T-cell (primary cell): ENCODE measurements at regions of chr5 and their contacts with region 1.

Region 1: DNA sequence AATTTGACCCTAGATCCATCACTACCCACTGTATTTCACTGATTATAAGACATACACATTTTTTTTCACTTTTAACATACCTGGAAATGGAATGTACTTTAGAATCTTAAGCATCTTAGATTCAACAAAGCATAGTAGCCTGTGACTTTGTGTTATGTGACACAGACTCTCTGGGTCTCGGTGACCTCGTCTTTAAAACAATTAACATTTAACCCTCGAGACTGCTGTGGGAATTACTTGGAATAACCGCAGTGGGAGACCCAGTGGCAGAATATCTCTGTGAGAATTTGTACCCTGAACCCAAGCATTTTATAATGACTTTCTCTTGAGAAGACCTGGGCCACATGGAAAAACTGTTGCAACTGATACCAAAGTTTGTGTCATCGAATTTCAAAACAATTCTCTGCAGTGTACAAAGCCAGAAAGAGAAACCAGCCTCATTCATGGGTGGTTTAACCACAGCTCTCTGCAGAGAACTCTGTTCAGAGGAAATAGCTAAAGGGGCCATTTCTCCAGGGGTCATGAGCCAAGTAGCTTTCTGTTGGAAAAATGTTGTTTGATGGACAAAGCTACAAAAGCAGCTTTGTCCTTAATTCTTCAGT is 10.0 kb upstream of the RETREG1 start:
- DNase-seq: peak in 7 of 35 experiments; percentile 7 to 48 (median 13)
- ATAC-seq: peak; percentile 60 to 71 (median 61)
- H3K4me3 ChIP-seq: no peak overlapping the region
- H3K4me3 Mint-ChIP-seq: peak overlapping the region in 2 of 3 donors; percentile 21 to 25
- H3K27ac ChIP-seq: peak overlapping the region; percentile 39
- H3K27ac Mint-ChIP-seq: peak overlapping the region; percentile 79 to 96
- H3K4me1 ChIP-seq: peaks cover 48 to 50% of the 10 kb centered on the region in 2 experiments
- H3K4me1 Mint-ChIP-seq: peaks cover 52 to 66% (median 55%) of the 10 kb centered on the region in 3 donors
- H3K27me3 ChIP-seq: no peaks in the 10 kb centered on the region
- H3K27me3 Mint-ChIP-seq: no peaks in the 10 kb centered on the region

Region 2: DNA sequence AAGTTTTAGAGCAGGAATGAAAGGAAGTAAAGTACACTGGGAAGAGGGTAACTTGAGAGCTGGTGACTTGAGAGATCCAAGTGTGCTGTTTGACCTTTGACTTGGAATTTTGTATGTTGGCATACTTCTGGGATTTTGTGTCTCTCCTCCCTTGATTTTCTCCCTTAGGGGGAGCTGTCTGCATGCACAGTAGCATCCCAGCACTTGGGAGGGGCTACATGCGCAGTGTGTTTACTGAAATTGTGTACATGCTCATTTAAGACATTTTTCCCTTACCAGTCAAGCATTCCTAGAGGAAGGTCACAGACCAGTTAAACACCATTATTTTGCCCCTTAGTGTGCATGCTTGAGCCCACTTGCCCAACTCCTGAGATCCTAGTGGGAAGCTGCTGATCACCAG is 281.3 kb before region 1 on chr5:
- CTCF ChIA-PET with region 1: no interaction called
- POLR2A ChIA-PET with region 1: no interaction called
- DNase-seq: no peak
- ATAC-seq: no peak
- H3K4me3 ChIP-seq: no peak overlapping the region
- H3K4me3 Mint-ChIP-seq: no peak overlapping the region
- H3K27ac ChIP-seq: no peak overlapping the region
- H3K27ac Mint-ChIP-seq: no peak overlapping the region
- H3K4me1 ChIP-seq: no peaks in the 10 kb centered on the region
- H3K4me1 Mint-ChIP-seq: no peaks in the 10 kb centered on the region
- H3K27me3 ChIP-seq: no peaks in the 10 kb centered on the region
- H3K27me3 Mint-ChIP-seq: peaks cover 5 to 18% of the 10 kb centered on the region in 2 donors

Region 3: DNA sequence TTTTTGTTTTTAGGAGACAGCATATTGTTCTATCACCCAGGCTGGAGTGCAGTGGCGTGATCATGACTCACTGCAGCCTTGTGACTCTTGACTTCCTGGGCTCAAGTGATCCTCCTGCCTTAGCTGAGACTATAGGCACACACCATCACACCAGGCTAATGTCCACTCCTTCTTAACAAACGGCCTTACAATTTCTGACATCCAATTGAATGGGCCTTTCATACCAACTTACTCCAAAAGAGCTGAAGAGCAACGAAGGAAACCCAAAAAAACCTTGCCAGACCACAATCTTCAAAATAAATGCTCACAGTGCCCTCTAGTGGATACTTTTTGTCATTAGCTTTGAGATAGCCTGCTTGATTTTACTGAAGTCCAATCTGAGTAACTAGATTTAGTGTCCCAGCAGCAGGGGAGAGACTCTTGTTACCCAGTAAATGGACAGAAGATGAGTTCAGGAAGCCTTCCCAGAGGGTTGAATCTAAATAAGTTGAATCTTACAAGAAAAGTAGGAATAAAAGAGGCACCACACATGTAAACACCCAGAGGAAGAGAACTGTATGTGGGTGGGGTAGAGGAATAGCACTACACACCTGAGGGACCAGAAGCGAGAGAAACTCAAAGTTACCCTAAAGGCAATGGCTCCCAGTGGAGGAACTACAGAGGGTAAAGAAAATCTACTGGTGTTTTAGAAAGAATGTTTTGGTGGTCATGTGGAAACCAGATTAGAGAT is 170.5 kb before region 1 on chr5:
- CTCF ChIA-PET with region 1: interaction called in 1 of 2 experiments, 15 read pairs
- POLR2A ChIA-PET with region 1: interaction called in 1 of 2 experiments, 5 read pairs
- DNase-seq: peak in 7 of 35 experiments; percentile 6 to 82 (median 8)
- ATAC-seq: peak; percentile 42 to 73 (median 66)
- H3K4me3 ChIP-seq: no peak overlapping the region
- H3K4me3 Mint-ChIP-seq: peak overlapping the region; percentile 28 to 50 (median 34)
- H3K27ac ChIP-seq: no peak overlapping the region
- H3K27ac Mint-ChIP-seq: peak overlapping the region; percentile 65 to 68
- H3K4me1 ChIP-seq: peaks cover 8 to 11% of the 10 kb centered on the region in 2 experiments
- H3K4me1 Mint-ChIP-seq: peaks cover 67 to 81% (median 71%) of the 10 kb centered on the region in 3 donors
- H3K27me3 ChIP-seq: no peaks in the 10 kb centered on the region
- H3K27me3 Mint-ChIP-seq: no peaks in the 10 kb centered on the region